ENCODE measurements at regions of chr9 and their contacts with region 1.

Region 1: GRCh38 chr9:123495731-123496130 is 139.7 kb downstream of the CRB2 start:
- DNase-seq: no peak
- ATAC-seq: no peak
- H3K4me3 ChIP-seq: no peak overlapping the region
- H3K27ac ChIP-seq: no peak overlapping the region
- H3K4me1 ChIP-seq: no peaks in the 10 kb centered on the region
- H3K27me3 ChIP-seq: no peaks in the 10 kb centered on the region
- CTCF ChIP-seq: no peak

Region 2: DNA sequence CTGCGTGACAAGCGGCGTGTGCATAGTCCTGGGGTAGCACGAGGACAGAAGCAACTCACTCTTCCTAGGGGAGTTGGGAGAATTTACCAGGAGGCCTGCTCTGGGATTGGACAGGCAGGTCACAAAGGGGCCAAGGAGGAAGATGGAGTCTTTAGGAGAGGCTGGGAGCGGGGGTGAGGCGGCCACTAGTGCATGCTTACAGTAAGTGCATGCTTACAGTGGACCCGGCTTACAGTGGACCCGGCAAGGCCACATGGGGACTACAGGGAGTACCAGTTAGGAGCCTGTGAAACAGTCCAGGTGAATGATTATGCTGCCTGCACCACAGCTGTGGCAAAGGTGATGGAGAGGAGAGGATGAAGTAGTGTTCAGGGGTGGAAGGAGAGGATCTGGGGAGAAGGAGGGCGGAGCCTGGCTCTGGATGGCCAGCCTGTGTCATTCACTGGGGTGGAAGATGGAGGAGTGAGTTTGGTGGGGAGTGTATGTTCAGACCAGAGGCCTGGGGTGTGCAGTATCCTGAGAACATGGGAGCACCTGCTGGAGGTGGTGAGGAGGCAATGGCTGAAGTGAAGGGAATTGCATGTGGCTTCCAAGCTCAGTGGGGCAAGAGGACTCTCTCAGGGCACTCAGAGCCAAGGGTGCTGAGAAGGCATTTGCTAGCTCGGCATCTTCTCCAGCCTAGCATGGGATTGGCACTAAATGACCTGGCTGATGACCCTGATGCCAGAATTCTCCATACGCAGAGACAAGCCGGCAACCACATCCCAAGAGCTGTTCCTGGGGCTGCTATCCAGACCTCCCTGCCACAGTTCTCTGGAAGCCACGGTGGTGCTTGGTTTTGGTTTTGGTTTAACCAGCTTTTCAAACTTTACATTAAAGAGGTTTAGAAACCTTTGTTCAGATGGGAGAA is 60.9 kb before region 1 on chr9:
- CTCF ChIA-PET with region 1: no interaction called
- POLR2A ChIA-PET with region 1: no interaction called
- in situ Hi-C with region 1: no loop called
- intact Hi-C with region 1: no loop called
- DNase-seq: no peak
- ATAC-seq: no peak
- H3K4me3 ChIP-seq: no peak overlapping the region
- H3K27ac ChIP-seq: no peak overlapping the region
- H3K4me1 ChIP-seq: no peaks in the 10 kb centered on the region
- H3K27me3 ChIP-seq: no peaks in the 10 kb centered on the region
- CTCF ChIP-seq: no peak; the same call in 1 of the 2 replicates

Region 3: DNA sequence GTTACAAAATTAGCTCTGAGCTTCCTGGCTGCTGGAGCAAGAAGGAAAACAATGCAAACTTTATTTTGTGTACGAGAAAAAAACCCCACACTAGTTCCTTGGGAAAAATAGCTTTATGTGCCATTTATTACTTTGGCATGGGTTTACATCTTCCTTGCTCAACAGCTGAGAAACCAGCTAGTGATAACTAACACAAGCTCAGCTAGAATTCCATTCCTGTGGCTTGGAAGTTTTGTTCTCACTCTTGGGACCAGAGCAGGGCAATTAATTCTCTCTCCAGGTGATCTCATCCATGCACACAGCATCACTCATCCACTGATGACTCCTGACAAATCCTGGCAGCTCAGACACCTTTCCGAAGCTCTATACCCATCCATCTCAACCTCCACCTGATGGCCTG is 35.6 kb before region 1 on chr9:
- CTCF ChIA-PET with region 1: no interaction called
- POLR2A ChIA-PET with region 1: interaction called, 23 read pairs
- in situ Hi-C with region 1: no loop called
- intact Hi-C with region 1: no loop called
- DNase-seq: no peak
- ATAC-seq: no peak
- H3K4me3 ChIP-seq: no peak overlapping the region
- H3K27ac ChIP-seq: no peak overlapping the region
- H3K4me1 ChIP-seq: no peaks in the 10 kb centered on the region
- H3K27me3 ChIP-seq: no peaks in the 10 kb centered on the region
- CTCF ChIP-seq: no peak